ENCODE measurements at regions of chr18 and their contacts with region 1.

Region 1: GRCh38 chr18:50853863-50854271 is 25.1 kb upstream of the ME2 start:
- DNase-seq: peak; percentile 79
- H3K4me3 Mint-ChIP-seq: no peak overlapping the region
- H3K27ac Mint-ChIP-seq: peak overlapping the region; percentile 5
- H3K4me1 Mint-ChIP-seq: peaks cover 24% of the 10 kb centered on the region
- H3K27me3 Mint-ChIP-seq: no peaks in the 10 kb centered on the region
- CTCF ChIP-seq: no peak

Region 2: DNA sequence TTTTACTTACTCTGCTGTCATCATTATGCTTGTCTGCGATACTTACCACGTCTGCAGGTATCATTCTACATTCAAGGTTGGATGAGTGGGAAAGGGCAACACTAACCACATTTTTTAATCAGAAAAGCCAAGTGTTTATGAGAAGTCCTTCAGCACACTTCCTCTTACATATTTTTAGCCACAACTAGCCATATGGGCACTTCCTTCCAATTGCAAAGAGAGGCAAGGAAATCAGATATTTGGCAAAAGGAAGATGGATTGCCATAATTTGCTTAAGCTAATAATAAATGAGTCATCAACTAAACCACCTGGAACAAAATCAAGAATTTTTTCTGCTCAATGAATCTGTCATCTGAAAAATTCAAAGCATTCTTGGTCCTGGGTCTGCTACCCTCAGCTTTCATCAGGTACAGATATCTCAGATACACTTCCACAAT is 17.3 kb before region 1 on chr18:
- CTCF ChIA-PET with region 1: interaction called, 8 read pairs
- POLR2A ChIA-PET with region 1: no interaction called
- intact Hi-C with region 1: loop called (anchors 1 kb)
- DNase-seq: peak; percentile 78
- H3K4me3 Mint-ChIP-seq: no peak overlapping the region
- H3K27ac Mint-ChIP-seq: no peak overlapping the region
- H3K4me1 Mint-ChIP-seq: peaks cover 17% of the 10 kb centered on the region
- H3K27me3 Mint-ChIP-seq: no peaks in the 10 kb centered on the region
- CTCF ChIP-seq: no peak

Measured in MCF 10A (cell line).